ENCODE measurements at regions of chr7 and their contacts with region 1.

Region 1: GRCh38 chr7:134432296-134433152 is 26.4 kb downstream of the AKR1B1 start:
- DNase-seq: peak; percentile 96
- H3K4me3 ChIP-seq: peak overlapping the region; percentile 37 to 53 (median 48)
- H3K27ac ChIP-seq: peak overlapping the region; percentile 76 to 82 (median 79)
- H3K4me1 ChIP-seq: peaks cover 8 to 19% (median 16%) of the 10 kb centered on the region in 4 donors
- H3K27me3 ChIP-seq: no peaks in the 10 kb centered on the region
- CTCF ChIP-seq: peak; percentile 69 to 84 (median 72)
- EP300 ChIP-seq: no peak
- POLR2A ChIP-seq: no peak

Region 2: GRCh38 chr7:134448700-134449229 is 16.2 kb after region 1 on chr7:
- intact Hi-C with region 1: no loop called
- DNase-seq: no peak
- H3K4me3 ChIP-seq: no peak overlapping the region
- H3K27ac ChIP-seq: no peak overlapping the region
- H3K4me1 ChIP-seq: peaks cover 14 to 20% (median 18%) of the 10 kb centered on the region in 4 donors
- H3K27me3 ChIP-seq: no peaks in the 10 kb centered on the region
- CTCF ChIP-seq: no peak
- EP300 ChIP-seq: no peak
- POLR2A ChIP-seq: no peak

Region 3: GRCh38 chr7:134514663-134515062 is 82.1 kb after region 1 on chr7:
- intact Hi-C with region 1: loop called (anchors 2 kb)
- DNase-seq: no peak
- H3K4me3 ChIP-seq: no peak overlapping the region
- H3K27ac ChIP-seq: no peak overlapping the region
- H3K4me1 ChIP-seq: peaks cover 0 to 7% (median 4%) of the 10 kb centered on the region in 4 donors
- H3K27me3 ChIP-seq: no peaks in the 10 kb centered on the region
- CTCF ChIP-seq: peak; percentile 74 to 83 (median 78)
- EP300 ChIP-seq: no peak
- POLR2A ChIP-seq: no peak

Region 4: GRCh38 chr7:134547397-134548054 is 115.0 kb after region 1 on chr7:
- intact Hi-C with region 1: loop called (anchors 10 kb)
- DNase-seq: no peak
- H3K4me3 ChIP-seq: peak overlapping the region; percentile 42 to 56 (median 44)
- H3K27ac ChIP-seq: peak overlapping the region in 3 of 4 donors; percentile 14 to 58 (median 45)
- H3K4me1 ChIP-seq: peaks cover 0 to 8% (median 2%) of the 10 kb centered on the region in 4 donors
- H3K27me3 ChIP-seq: no peaks in the 10 kb centered on the region
- CTCF ChIP-seq: peak; percentile 78 to 90 (median 79)
- EP300 ChIP-seq: no peak
- POLR2A ChIP-seq: no peak

Measured in esophagus muscularis mucosa (tissue), 4 donors.